HepG2 (cell line): ENCODE measurements at regions of chr13 and their contacts with region 1.

Region 1: DNA sequence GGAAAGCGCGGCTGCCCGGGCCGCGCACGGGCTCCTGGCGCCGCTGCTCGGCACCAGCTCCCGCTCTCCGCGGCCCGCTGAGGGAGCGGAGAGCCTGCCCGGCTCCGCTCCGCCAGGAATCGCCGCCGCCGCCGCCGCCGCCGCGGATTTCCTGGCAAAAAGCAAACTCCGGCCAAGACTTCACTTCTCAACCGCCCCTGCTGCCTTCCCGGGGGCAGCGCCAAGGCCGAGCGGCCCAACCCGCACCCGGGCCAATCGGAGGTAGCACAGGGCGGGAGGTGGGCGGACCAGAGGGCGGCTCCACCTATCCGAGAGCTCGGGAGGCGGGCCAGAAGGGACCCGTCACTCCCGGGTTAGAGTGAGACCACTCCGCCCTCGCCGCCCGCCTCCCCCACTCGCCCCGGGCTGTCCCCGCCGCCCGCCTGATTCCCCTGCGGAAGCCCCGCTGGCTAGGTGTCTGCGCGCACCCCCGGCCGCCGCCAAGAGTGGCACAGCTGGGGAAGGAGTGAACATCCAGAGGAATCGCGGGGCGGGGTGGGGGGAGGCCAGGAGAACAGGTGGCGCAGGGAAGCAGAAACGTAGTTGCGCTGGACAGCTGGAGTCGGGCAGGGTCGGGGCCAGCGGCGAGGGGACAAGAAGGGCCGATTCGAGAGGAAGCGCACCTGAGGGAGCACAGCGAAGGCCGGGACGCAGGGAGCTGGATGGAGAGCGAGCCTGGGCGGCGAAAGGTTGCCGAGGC is at the start of gene LNX2:
- DNase-seq: peak; percentile 91
- ATAC-seq: peak; percentile 94
- H3K4me3 ChIP-seq: peak within 1 kb of the TSS; percentile 79 to 95 (median 91)
- H3K27ac ChIP-seq: peak within 1 kb of the TSS; percentile 91
- H3K4me1 ChIP-seq: peaks cover 62% of the 10 kb centered on the region
- H3K27me3 ChIP-seq: no peaks in the 10 kb centered on the region; a peak in 1 of 5 replicates
- CTCF ChIP-seq: peak; percentile 10; the same call in 1 of the 2 replicates
- EP300 ChIP-seq: no peak
- POLR2A ChIP-seq: peak in 1 of 2 experiments; percentile 64; a peak in 3 of 4 replicates
- RAD21 ChIP-seq: 0 out of 2 replicates have a peak, but pooled peaks have one; percentile 64
- total RNA-seq, gene LNX2: 9.7 and 13.1 TPM in 2 replicates

Region 2: GRCh38 chr13:27171827-27172494 is 448.6 kb before region 1 on chr13:
- CTCF ChIA-PET with region 1: no interaction called
- POLR2A ChIA-PET with region 1: no interaction called
- in situ Hi-C with region 1: no loop called
- intact Hi-C with region 1: no loop called
- DNase-seq: peak; percentile 62
- ATAC-seq: peak; percentile 94
- H3K4me3 ChIP-seq: peak overlapping the region; percentile 83 to 92 (median 87)
- H3K27ac ChIP-seq: peak overlapping the region; percentile 35
- H3K4me1 ChIP-seq: peaks cover 33% of the 10 kb centered on the region
- H3K27me3 ChIP-seq: peaks cover 0 to 3% of the 10 kb centered on the region in 2 experiments; a peak in 1 of 5 replicates
- CTCF ChIP-seq: peak; percentile 59
- EP300 ChIP-seq: no peak
- POLR2A ChIP-seq: peak in 1 of 2 experiments; percentile 9; a peak in 1 of 4 replicates
- RAD21 ChIP-seq: no peak

Region 3: GRCh38 chr13:27599845-27600553 is 20.5 kb before region 1 on chr13:
- CTCF ChIA-PET with region 1: no interaction called
- POLR2A ChIA-PET with region 1: interaction called, 13 read pairs
- in situ Hi-C with region 1: no loop called
- intact Hi-C with region 1: no loop called
- DNase-seq: peak; percentile 67
- ATAC-seq: peak; percentile 84
- H3K4me3 ChIP-seq: no peak overlapping the region
- H3K27ac ChIP-seq: no peak overlapping the region
- H3K4me1 ChIP-seq: peaks cover 59% of the 10 kb centered on the region
- H3K27me3 ChIP-seq: no peaks in the 10 kb centered on the region
- CTCF ChIP-seq: no peak
- EP300 ChIP-seq: no peak
- POLR2A ChIP-seq: no peak
- RAD21 ChIP-seq: no peak

Region 4: DNA sequence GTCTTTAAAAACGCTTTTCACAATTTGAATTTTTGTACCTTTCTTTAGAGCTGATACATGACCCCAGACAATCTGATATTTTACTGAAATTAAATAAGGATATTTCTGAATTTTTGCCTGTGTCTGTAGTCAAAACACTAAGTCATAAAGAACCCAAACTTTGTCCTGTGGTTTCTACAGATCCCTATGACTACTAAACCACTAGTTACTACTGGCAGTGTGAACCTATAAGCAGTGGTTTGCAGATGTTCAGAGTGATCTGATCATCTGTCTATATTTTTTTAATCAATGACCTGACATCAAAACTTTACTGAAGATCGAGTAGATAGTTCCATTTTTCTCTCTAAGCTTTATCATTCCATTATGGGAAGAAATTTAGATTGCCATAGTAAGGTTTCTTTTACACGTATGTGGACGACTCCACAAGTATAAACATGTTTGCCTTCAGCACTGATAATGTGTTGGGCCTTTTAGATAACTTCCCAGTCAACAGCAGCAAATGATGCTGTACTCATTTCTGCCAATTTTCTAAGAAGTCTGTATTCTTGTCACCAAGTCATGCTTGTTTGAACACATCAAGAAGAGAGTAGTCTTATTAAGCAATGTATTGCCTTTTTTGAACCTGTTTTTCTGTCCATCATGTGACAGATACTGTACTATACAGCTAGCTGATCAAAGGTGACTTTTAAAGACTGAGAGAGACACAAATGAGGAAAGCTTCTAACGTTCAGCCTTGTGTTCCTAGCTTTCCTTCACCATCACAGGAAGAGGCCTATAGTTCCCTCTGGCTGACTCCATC is 23.0 kb after region 1 on chr13:
- CTCF ChIA-PET with region 1: no interaction called
- POLR2A ChIA-PET with region 1: interaction called, 18 read pairs
- in situ Hi-C with region 1: no loop called
- intact Hi-C with region 1: loop called (anchors 1 kb)
- DNase-seq: no peak
- ATAC-seq: no peak
- H3K4me3 ChIP-seq: no peak overlapping the region
- H3K27ac ChIP-seq: peak overlapping the region; percentile 86
- H3K4me1 ChIP-seq: peaks cover 67% of the 10 kb centered on the region
- H3K27me3 ChIP-seq: no peaks in the 10 kb centered on the region
- CTCF ChIP-seq: no peak
- EP300 ChIP-seq: no peak
- POLR2A ChIP-seq: no peak
- RAD21 ChIP-seq: no peak

Region 5: DNA sequence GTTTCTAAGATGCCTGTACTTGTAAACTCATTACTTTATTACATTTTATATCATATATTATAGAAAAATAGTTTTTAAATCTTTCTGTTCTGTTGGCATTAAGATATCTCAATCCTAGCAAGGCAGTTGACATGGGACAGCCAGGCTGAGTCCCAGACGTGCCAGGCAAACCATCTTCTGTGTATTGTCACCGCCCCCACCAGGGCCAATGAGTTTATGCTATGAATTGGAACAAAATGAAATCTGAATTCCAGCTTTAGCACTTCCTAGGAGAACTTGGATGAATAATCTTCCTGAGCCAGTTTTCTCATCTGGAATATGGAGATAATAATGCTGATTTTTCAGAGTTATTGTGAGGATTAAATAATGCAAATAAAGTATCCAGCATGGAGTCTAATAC is 91.9 kb after region 1 on chr13:
- CTCF ChIA-PET with region 1: no interaction called
- POLR2A ChIA-PET with region 1: no interaction called
- in situ Hi-C with region 1: no loop called
- intact Hi-C with region 1: loop called (anchors 5 kb)
- DNase-seq: peak; percentile 36
- ATAC-seq: peak; percentile 84
- H3K4me3 ChIP-seq: no peak overlapping the region
- H3K27ac ChIP-seq: no peak overlapping the region
- H3K4me1 ChIP-seq: peaks cover 16% of the 10 kb centered on the region; the same call in 1 of the 2 replicates
- H3K27me3 ChIP-seq: peaks cover 0 to 1% of the 10 kb centered on the region in 2 experiments; a peak in 2 of 5 replicates
- CTCF ChIP-seq: peak; percentile 69
- EP300 ChIP-seq: no peak
- POLR2A ChIP-seq: no peak
- RAD21 ChIP-seq: peak; percentile 51